ENCODE measurements at regions of chr10 and their contacts with region 1.

Region 1: GRCh38 chr10:112898540-112899395 is 51.3 kb upstream of the TCF7L2 start:
- DNase-seq: peak; percentile 33
- H3K4me3 ChIP-seq: peak overlapping the region; percentile 22
- CTCF ChIP-seq: no peak

Region 2: GRCh38 chr10:112852306-112852705 is 46.5 kb before region 1 on chr10:
- in situ Hi-C with region 1: loop called (anchors 5 kb)
- DNase-seq: no peak
- H3K4me3 ChIP-seq: no peak overlapping the region
- CTCF ChIP-seq: no peak

Measured in astrocyte of the cerebellum (primary cell).